CD4-positive, alpha-beta memory T cell (primary cell): ENCODE measurements at regions of chr15 and their contacts with region 1.

Region 1: GRCh38 chr15:92808978-92809879 is 90.9 kb upstream of the CHD2 start:
- DNase-seq: peak; percentile 98 to 100 (median 99)
- H3K4me3 ChIP-seq: peak overlapping the region; percentile 84 to 94
- H3K4me3 Mint-ChIP-seq: peak overlapping the region; percentile 79 to 97 (median 89)
- H3K27ac ChIP-seq: peak overlapping the region; percentile 91
- H3K27ac Mint-ChIP-seq: peak overlapping the region; percentile 92 to 100 (median 95)
- H3K4me1 ChIP-seq: peaks cover 58% of the 10 kb centered on the region
- H3K4me1 Mint-ChIP-seq: peaks cover 27 to 68% (median 43%) of the 10 kb centered on the region in 4 donors
- H3K27me3 ChIP-seq: no peaks in the 10 kb centered on the region
- H3K27me3 Mint-ChIP-seq: no peaks in the 10 kb centered on the region

Region 2: GRCh38 chr15:92158434-92158833 is 650.8 kb before region 1 on chr15:
- CTCF ChIA-PET with region 1: no interaction called
- POLR2A ChIA-PET with region 1: no interaction called
- intact Hi-C with region 1: no loop called
- DNase-seq: peak in 2 of 5 donors; percentile 8 to 70
- H3K4me3 ChIP-seq: no peak overlapping the region
- H3K4me3 Mint-ChIP-seq: no peak overlapping the region
- H3K27ac ChIP-seq: no peak overlapping the region
- H3K27ac Mint-ChIP-seq: peak overlapping the region in 5 of 7 donors; percentile 43 to 73 (median 49)
- H3K4me1 ChIP-seq: no peaks in the 10 kb centered on the region
- H3K4me1 Mint-ChIP-seq: peaks cover 4 to 26% (median 10%) of the 10 kb centered on the region in 4 donors
- H3K27me3 ChIP-seq: no peaks in the 10 kb centered on the region
- H3K27me3 Mint-ChIP-seq: no peaks in the 10 kb centered on the region

Region 3: GRCh38 chr15:92820236-92821021 is 11.2 kb after region 1 on chr15:
- CTCF ChIA-PET with region 1: interaction called, 37 read pairs
- POLR2A ChIA-PET with region 1: interaction called, 232 read pairs
- intact Hi-C with region 1: loop called (anchors 1 kb)
- DNase-seq: peak; percentile 87 to 89 (median 88)
- H3K4me3 ChIP-seq: peak overlapping the region; percentile 79 to 86
- H3K4me3 Mint-ChIP-seq: peak overlapping the region; percentile 74 to 93 (median 91)
- H3K27ac ChIP-seq: peak overlapping the region; percentile 74
- H3K27ac Mint-ChIP-seq: peak overlapping the region; percentile 97 to 99 (median 99)
- H3K4me1 ChIP-seq: peaks cover 67% of the 10 kb centered on the region
- H3K4me1 Mint-ChIP-seq: peaks cover 40 to 65% (median 54%) of the 10 kb centered on the region in 4 donors
- H3K27me3 ChIP-seq: no peaks in the 10 kb centered on the region
- H3K27me3 Mint-ChIP-seq: no peaks in the 10 kb centered on the region

Region 4: DNA sequence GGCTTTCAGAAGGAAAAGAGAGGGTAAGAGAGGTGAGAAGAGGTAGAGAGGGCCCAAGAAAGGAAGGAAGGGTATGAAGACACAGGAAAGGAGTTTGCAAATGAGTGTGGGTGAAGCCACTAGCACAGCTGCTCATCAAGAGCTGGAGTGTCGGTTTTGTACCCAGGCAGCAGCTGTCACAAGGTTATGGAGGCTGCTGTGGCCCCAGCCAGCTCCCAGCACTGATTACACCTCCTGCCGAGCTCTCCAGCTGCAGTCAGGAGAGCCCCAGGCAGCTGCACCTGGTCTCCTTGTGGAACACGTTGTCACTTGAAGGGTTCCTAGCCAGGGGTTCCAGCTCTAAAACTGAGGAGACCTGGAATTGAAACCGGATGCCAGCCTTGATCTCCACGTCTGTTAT is 30.5 kb after region 1 on chr15:
- CTCF ChIA-PET with region 1: interaction called, 50 read pairs
- POLR2A ChIA-PET with region 1: interaction called, 281 read pairs
- intact Hi-C with region 1: no loop called
- DNase-seq: peak in 1 of 5 donors; percentile 6
- H3K4me3 ChIP-seq: no peak overlapping the region
- H3K4me3 Mint-ChIP-seq: peak overlapping the region; percentile 7 to 75 (median 66)
- H3K27ac ChIP-seq: no peak overlapping the region
- H3K27ac Mint-ChIP-seq: peak overlapping the region; percentile 68 to 95 (median 89)
- H3K4me1 ChIP-seq: peaks cover 36% of the 10 kb centered on the region
- H3K4me1 Mint-ChIP-seq: peaks cover 17 to 58% (median 39%) of the 10 kb centered on the region in 4 donors
- H3K27me3 ChIP-seq: no peaks in the 10 kb centered on the region
- H3K27me3 Mint-ChIP-seq: no peaks in the 10 kb centered on the region

Region 5: GRCh38 chr15:92889390-92890107 is 80.3 kb after region 1 on chr15:
- CTCF ChIA-PET with region 1: interaction called, 82 read pairs
- POLR2A ChIA-PET with region 1: interaction called, 1,104 read pairs
- intact Hi-C with region 1: no loop called
- DNase-seq: no peak
- H3K4me3 ChIP-seq: peak overlapping the region in 1 of 2 donors; percentile 40
- H3K4me3 Mint-ChIP-seq: peak overlapping the region; percentile 56 to 88 (median 82)
- H3K27ac ChIP-seq: peak overlapping the region; percentile 17
- H3K27ac Mint-ChIP-seq: peak overlapping the region; percentile 74 to 98 (median 88)
- H3K4me1 ChIP-seq: peaks cover 92% of the 10 kb centered on the region
- H3K4me1 Mint-ChIP-seq: peaks cover 48 to 86% (median 58%) of the 10 kb centered on the region in 4 donors
- H3K27me3 ChIP-seq: no peaks in the 10 kb centered on the region
- H3K27me3 Mint-ChIP-seq: no peaks in the 10 kb centered on the region

Region 6: DNA sequence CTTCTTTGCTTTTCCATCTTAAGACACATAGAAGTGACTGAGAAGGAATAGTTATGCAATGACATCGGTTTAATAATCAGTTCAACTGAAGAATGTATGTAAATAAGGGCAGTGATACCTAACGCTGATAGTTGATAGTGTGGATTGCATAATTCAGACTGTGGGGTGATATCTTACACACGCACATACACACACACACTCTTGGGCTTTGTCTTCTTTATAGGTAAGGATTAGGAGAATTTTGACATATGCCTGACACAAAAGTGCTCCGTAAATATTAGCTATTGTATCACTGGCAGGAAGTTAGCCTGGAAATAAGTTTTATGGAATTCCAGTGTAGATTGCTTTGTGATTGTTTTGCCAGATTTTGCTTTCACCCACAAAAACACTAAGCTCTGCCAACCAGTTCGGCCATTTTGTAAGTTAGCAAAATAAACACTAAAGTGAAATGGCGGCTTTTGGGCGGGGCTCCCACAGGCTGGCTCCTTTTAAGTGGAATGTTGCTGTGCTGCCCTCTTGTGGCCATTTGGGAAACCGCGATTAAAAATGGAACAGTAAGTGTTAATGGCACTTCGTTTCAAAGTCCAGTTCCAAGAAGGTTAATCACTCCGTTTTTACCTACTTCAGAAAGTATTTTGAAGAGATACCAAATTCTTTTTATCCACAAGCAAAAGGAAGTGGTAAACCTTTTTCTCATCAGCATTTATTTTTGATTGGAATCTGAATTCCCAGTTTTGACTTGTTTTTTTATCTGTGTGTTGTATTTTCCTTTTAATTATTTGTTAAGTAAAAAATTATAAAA is 108.6 kb after region 1 on chr15:
- CTCF ChIA-PET with region 1: interaction called, 121 read pairs
- POLR2A ChIA-PET with region 1: interaction called, 295 read pairs
- intact Hi-C with region 1: loop called (anchors 1 kb)
- DNase-seq: peak; percentile 87 to 91 (median 89)
- H3K4me3 ChIP-seq: no peak overlapping the region
- H3K4me3 Mint-ChIP-seq: peak overlapping the region; percentile 54 to 79 (median 62)
- H3K27ac ChIP-seq: peak overlapping the region; percentile 82
- H3K27ac Mint-ChIP-seq: peak overlapping the region; percentile 90 to 100 (median 96)
- H3K4me1 ChIP-seq: peaks cover 97% of the 10 kb centered on the region
- H3K4me1 Mint-ChIP-seq: peaks cover 72 to 90% (median 80%) of the 10 kb centered on the region in 4 donors
- H3K27me3 ChIP-seq: no peaks in the 10 kb centered on the region
- H3K27me3 Mint-ChIP-seq: no peaks in the 10 kb centered on the region

Region 7: GRCh38 chr15:93030430-93031105 is 221.3 kb after region 1 on chr15:
- CTCF ChIA-PET with region 1: no interaction called
- POLR2A ChIA-PET with region 1: no interaction called
- intact Hi-C with region 1: no loop called
- DNase-seq: peak in 4 of 5 donors; percentile 57 to 71 (median 63)
- H3K4me3 ChIP-seq: no peak overlapping the region
- H3K4me3 Mint-ChIP-seq: peak overlapping the region in 1 of 8 donors; percentile 27
- H3K27ac ChIP-seq: no peak overlapping the region
- H3K27ac Mint-ChIP-seq: peak overlapping the region; percentile 17 to 85 (median 66)
- H3K4me1 ChIP-seq: peaks cover 22% of the 10 kb centered on the region
- H3K4me1 Mint-ChIP-seq: peaks cover 14 to 29% (median 19%) of the 10 kb centered on the region in 4 donors
- H3K27me3 ChIP-seq: no peaks in the 10 kb centered on the region
- H3K27me3 Mint-ChIP-seq: no peaks in the 10 kb centered on the region

Region 8: GRCh38 chr15:93587059-93587521 is 777.9 kb after region 1 on chr15:
- CTCF ChIA-PET with region 1: no interaction called
- POLR2A ChIA-PET with region 1: no interaction called
- intact Hi-C with region 1: no loop called
- DNase-seq: no peak
- H3K4me3 ChIP-seq: no peak overlapping the region
- H3K4me3 Mint-ChIP-seq: no peak overlapping the region
- H3K27ac ChIP-seq: no peak overlapping the region
- H3K27ac Mint-ChIP-seq: no peak overlapping the region
- H3K4me1 ChIP-seq: no peaks in the 10 kb centered on the region
- H3K4me1 Mint-ChIP-seq: no peaks in the 10 kb centered on the region
- H3K27me3 ChIP-seq: peaks cover 8% of the 10 kb centered on the region
- H3K27me3 Mint-ChIP-seq: peaks cover 6 to 13% of the 10 kb centered on the region in 2 donors